Psoas muscle (tissue), 8 donors: ENCODE measurements at regions of chr10 and their contacts with region 1.

Region 1: GRCh38 chr10:24041034-24041433 is 167.9 kb upstream of the KIAA1217 start:
- DNase-seq: no peak
- ATAC-seq: no peak
- H3K4me3 ChIP-seq: no peak overlapping the region
- H3K27ac ChIP-seq: peak overlapping the region; percentile 84
- H3K4me1 ChIP-seq: peaks cover 38% of the 10 kb centered on the region
- H3K27me3 ChIP-seq: no peaks in the 10 kb centered on the region
- CTCF ChIP-seq: no peak

Region 2: GRCh38 chr10:23768270-23768669 is 272.8 kb before region 1 on chr10:
- intact Hi-C with region 1: no loop called
- DNase-seq: no peak
- ATAC-seq: no peak
- H3K4me3 ChIP-seq: no peak overlapping the region
- H3K27ac ChIP-seq: no peak overlapping the region
- H3K4me1 ChIP-seq: no peaks in the 10 kb centered on the region
- H3K27me3 ChIP-seq: no peaks in the 10 kb centered on the region
- CTCF ChIP-seq: no peak

Region 3: GRCh38 chr10:24010436-24010970 is 30.5 kb before region 1 on chr10:
- intact Hi-C with region 1: loop called in 1 of 2 experiments (anchors 2 kb)
- DNase-seq: no peak
- ATAC-seq: no peak
- H3K4me3 ChIP-seq: no peak overlapping the region
- H3K27ac ChIP-seq: no peak overlapping the region
- H3K4me1 ChIP-seq: peaks cover 30% of the 10 kb centered on the region
- H3K27me3 ChIP-seq: no peaks in the 10 kb centered on the region
- CTCF ChIP-seq: no peak